CD4-positive, alpha-beta T cell (primary cell): ENCODE measurements at regions of chr19 and their contacts with region 1.

Region 1: DNA sequence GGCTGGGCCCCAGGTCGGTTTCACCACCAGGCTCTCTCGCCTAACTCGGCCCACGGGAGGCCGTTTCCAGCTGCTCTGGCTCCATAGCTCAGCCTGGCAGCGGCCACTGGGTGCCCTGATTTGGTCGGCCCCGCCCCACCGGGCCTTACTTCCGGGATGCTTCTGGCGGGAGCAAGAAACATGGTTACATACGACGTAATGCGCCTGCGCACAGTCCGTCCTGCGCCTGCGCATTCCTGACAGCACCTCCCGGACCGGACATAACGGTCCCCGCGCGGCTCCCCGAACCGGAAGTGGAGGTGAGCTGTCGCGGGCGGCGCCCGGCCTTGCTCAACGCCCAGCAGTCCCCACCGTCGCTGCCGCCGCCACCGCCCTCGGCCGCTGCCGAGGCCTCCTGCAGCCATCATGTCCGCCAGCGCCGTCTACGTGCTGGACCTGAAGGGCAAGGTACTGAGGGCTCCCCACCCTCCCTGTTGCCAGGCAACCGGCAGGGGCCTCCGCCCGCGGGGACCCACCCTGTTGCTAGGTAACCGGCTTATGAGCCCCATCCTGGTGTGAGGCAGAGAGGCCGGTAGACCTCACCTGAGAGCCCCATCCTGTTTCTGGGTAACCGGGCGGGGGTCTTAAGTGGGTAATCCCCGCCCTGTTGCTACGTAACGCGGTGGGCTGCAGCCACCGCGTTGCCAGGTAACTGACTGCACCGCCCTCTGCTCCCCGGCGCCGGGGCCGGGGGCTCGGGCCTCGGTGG is at the start of gene AP1M1:
- DNase-seq: peak; percentile 96 to 99 (median 99)
- ATAC-seq: peak; percentile 87
- H3K4me3 ChIP-seq: peak within 1 kb of the TSS; percentile 90
- H3K4me3 Mint-ChIP-seq: peak within 1 kb of the TSS; percentile 95
- H3K27ac ChIP-seq: peak within 1 kb of the TSS; percentile 69 to 81
- H3K27ac Mint-ChIP-seq: peak within 1 kb of the TSS; percentile 92
- H3K4me1 ChIP-seq: peaks cover 35% of the 10 kb centered on the region
- H3K4me1 Mint-ChIP-seq: peaks cover 37% of the 10 kb centered on the region
- H3K27me3 ChIP-seq: no peaks in the 10 kb centered on the region
- H3K27me3 Mint-ChIP-seq: no peaks in the 10 kb centered on the region
- CTCF ChIP-seq: peak; percentile 6
- total RNA-seq, gene AP1M1: 52.1 to 58.3 TPM

Region 2: GRCh38 chr19:15836595-15837337 is 361.0 kb before region 1 on chr19:
- CTCF ChIA-PET with region 1: no interaction called
- POLR2A ChIA-PET with region 1: interaction called, 5 read pairs
- intact Hi-C with region 1: loop called in 1 of 2 experiments (anchors 5 kb)
- DNase-seq: peak; percentile 86 to 98 (median 95)
- ATAC-seq: peak; percentile 86
- H3K4me3 ChIP-seq: peak overlapping the region; percentile 96
- H3K4me3 Mint-ChIP-seq: peak overlapping the region; percentile 96
- H3K27ac ChIP-seq: peak overlapping the region; percentile 97 to 99
- H3K27ac Mint-ChIP-seq: peak overlapping the region; percentile 92
- H3K4me1 ChIP-seq: peaks cover 20% of the 10 kb centered on the region
- H3K4me1 Mint-ChIP-seq: peaks cover 18% of the 10 kb centered on the region
- H3K27me3 ChIP-seq: no peaks in the 10 kb centered on the region
- H3K27me3 Mint-ChIP-seq: no peaks in the 10 kb centered on the region
- CTCF ChIP-seq: no peak

Region 3: DNA sequence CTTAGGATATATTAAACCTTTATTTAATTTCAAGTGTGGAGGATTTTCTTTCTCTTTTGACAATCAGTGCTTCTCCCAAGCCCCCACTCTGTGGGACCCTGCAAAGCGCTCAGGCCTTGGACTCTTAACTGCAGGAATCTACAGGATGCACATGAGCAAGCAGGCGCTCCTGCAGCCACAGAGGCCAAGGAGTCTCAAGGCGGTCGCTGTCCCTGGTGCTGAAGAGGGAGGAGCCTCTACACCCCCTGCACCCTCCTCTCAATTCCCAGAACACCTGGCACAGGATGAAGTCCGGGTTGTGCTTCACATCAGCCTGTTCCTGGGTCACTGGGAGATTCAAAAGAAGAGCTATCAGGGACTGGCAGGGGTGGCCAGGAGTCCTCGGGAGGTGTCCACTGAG is 235.5 kb before region 1 on chr19:
- CTCF ChIA-PET with region 1: no interaction called
- POLR2A ChIA-PET with region 1: no interaction called
- intact Hi-C with region 1: no loop called
- DNase-seq: no peak
- ATAC-seq: no peak
- H3K4me3 ChIP-seq: no peak overlapping the region
- H3K4me3 Mint-ChIP-seq: no peak overlapping the region
- H3K27ac ChIP-seq: no peak overlapping the region
- H3K27ac Mint-ChIP-seq: no peak overlapping the region
- H3K4me1 ChIP-seq: no peaks in the 10 kb centered on the region
- H3K4me1 Mint-ChIP-seq: no peaks in the 10 kb centered on the region
- H3K27me3 ChIP-seq: peaks cover 16 to 37% of the 10 kb centered on the region in 2 experiments
- H3K27me3 Mint-ChIP-seq: peaks cover 65% of the 10 kb centered on the region
- CTCF ChIP-seq: no peak

Region 4: GRCh38 chr19:16217716-16218451 is 20.1 kb after region 1 on chr19:
- CTCF ChIA-PET with region 1: no interaction called
- POLR2A ChIA-PET with region 1: no interaction called
- intact Hi-C with region 1: no loop called
- DNase-seq: peak in 2 of 14 experiments; percentile 13 to 14
- ATAC-seq: no peak
- H3K4me3 ChIP-seq: no peak overlapping the region
- H3K4me3 Mint-ChIP-seq: no peak overlapping the region
- H3K27ac ChIP-seq: no peak overlapping the region
- H3K27ac Mint-ChIP-seq: peak overlapping the region; percentile 73
- H3K4me1 ChIP-seq: peaks cover 34% of the 10 kb centered on the region
- H3K4me1 Mint-ChIP-seq: peaks cover 53% of the 10 kb centered on the region
- H3K27me3 ChIP-seq: no peaks in the 10 kb centered on the region
- H3K27me3 Mint-ChIP-seq: no peaks in the 10 kb centered on the region
- CTCF ChIP-seq: no peak

Region 5: DNA sequence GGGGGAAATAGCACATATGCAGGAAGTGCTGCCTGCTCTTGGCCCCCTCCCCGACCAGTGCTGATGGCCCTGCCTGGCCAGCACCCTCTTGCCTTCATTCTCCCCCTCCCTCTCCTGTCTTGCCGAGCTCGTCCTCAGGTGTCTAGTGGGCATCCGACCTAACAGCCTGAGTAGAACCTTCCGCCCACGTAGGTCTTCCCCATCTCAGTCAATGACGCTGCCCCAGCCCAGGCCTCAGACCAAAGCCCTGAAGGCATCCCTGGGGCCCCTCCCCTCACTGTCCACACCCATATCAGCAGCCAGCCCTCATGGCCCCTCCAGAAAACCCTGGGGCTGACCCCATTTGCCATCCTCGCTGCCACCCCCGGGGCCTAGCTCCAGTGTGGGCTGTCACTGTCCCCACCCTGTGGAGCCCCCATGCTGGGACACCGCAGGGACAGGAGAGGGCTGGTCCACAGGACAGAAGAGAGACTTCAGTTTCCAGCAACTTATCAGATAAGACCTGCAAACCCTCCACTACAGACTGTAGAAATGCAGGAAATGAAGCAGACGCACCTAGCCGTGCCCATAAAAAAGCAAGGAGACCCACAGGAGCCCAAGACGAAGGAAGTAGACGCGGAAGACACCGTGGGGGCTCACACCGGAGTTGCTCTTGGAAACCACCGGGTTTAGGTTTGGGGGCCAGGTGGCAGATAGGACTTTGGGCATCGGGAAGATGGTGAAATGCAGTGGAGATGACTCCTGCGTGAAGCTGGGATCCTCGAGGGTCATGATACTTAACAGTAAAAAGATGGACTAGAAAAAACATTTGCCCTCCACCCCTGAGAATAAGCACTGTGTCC is 38.2 kb after region 1 on chr19:
- CTCF ChIA-PET with region 1: no interaction called
- POLR2A ChIA-PET with region 1: no interaction called
- intact Hi-C with region 1: loop called in 1 of 2 experiments (anchors 5 kb)
- DNase-seq: no peak
- ATAC-seq: no peak
- H3K4me3 ChIP-seq: no peak overlapping the region
- H3K4me3 Mint-ChIP-seq: no peak overlapping the region
- H3K27ac ChIP-seq: peak overlapping the region in 1 of 2 donors; percentile 42
- H3K27ac Mint-ChIP-seq: peak overlapping the region; percentile 69
- H3K4me1 ChIP-seq: peaks cover 18% of the 10 kb centered on the region
- H3K4me1 Mint-ChIP-seq: peaks cover 36% of the 10 kb centered on the region
- H3K27me3 ChIP-seq: no peaks in the 10 kb centered on the region
- H3K27me3 Mint-ChIP-seq: no peaks in the 10 kb centered on the region
- CTCF ChIP-seq: no peak

Region 6: GRCh38 chr19:16293118-16294091 is 95.6 kb after region 1 on chr19:
- CTCF ChIA-PET with region 1: no interaction called
- POLR2A ChIA-PET with region 1: no interaction called
- intact Hi-C with region 1: no loop called
- DNase-seq: peak in 1 of 14 experiments; percentile 33
- ATAC-seq: no peak
- H3K4me3 ChIP-seq: no peak overlapping the region
- H3K4me3 Mint-ChIP-seq: no peak overlapping the region
- H3K27ac ChIP-seq: no peak overlapping the region
- H3K27ac Mint-ChIP-seq: no peak overlapping the region
- H3K4me1 ChIP-seq: peaks cover 5% of the 10 kb centered on the region
- H3K4me1 Mint-ChIP-seq: peaks cover 9% of the 10 kb centered on the region
- H3K27me3 ChIP-seq: no peaks in the 10 kb centered on the region
- H3K27me3 Mint-ChIP-seq: no peaks in the 10 kb centered on the region
- CTCF ChIP-seq: no peak

Region 7: DNA sequence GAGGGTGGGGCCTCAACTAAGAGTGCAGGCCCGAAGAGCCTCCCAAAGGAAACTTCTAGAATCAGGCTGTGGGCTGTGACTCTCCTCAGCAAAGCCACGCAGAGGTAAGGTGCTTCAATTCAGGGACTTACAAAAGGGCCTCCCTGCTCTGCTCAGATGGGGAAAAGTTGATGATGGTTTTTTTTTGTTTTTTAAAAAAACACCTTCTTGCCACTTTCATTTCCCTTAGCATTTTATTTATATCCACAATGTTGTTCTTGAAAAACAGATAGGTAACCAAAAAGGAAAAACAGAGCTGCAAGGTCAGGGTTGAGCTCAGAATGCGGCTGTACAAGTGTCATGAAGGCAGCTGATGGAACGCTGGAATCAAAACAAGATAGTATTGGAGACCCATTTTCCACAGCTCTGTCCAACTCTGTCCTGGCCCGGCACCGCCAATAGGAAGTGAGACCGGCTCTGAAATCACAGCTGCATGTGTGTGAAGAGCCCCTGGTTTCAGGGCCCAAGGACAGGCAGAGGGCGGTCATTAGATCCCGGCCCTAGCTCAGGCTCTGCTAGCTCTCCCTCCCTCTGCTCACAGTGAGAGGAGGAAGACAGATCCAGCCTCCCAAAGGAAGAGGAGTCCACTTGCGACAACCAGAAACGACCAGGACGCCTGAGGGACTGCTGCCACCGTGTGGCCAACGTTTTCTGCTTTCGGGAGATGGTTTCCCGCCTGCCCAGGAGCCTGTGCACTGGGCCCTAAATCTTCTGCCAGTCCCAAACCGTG is 185.2 kb after region 1 on chr19:
- CTCF ChIA-PET with region 1: no interaction called
- POLR2A ChIA-PET with region 1: no interaction called
- intact Hi-C with region 1: loop called in 1 of 2 experiments (anchors 5 kb)
- DNase-seq: peak; percentile 69 to 90 (median 82)
- ATAC-seq: peak; percentile 81
- H3K4me3 ChIP-seq: peak overlapping the region; percentile 19
- H3K4me3 Mint-ChIP-seq: peak overlapping the region; percentile 76
- H3K27ac ChIP-seq: peak overlapping the region; percentile 16 to 67
- H3K27ac Mint-ChIP-seq: no peak overlapping the region
- H3K4me1 ChIP-seq: peaks cover 82% of the 10 kb centered on the region
- H3K4me1 Mint-ChIP-seq: peaks cover 62% of the 10 kb centered on the region
- H3K27me3 ChIP-seq: no peaks in the 10 kb centered on the region
- H3K27me3 Mint-ChIP-seq: no peaks in the 10 kb centered on the region
- CTCF ChIP-seq: peak; percentile 92

Region 8: DNA sequence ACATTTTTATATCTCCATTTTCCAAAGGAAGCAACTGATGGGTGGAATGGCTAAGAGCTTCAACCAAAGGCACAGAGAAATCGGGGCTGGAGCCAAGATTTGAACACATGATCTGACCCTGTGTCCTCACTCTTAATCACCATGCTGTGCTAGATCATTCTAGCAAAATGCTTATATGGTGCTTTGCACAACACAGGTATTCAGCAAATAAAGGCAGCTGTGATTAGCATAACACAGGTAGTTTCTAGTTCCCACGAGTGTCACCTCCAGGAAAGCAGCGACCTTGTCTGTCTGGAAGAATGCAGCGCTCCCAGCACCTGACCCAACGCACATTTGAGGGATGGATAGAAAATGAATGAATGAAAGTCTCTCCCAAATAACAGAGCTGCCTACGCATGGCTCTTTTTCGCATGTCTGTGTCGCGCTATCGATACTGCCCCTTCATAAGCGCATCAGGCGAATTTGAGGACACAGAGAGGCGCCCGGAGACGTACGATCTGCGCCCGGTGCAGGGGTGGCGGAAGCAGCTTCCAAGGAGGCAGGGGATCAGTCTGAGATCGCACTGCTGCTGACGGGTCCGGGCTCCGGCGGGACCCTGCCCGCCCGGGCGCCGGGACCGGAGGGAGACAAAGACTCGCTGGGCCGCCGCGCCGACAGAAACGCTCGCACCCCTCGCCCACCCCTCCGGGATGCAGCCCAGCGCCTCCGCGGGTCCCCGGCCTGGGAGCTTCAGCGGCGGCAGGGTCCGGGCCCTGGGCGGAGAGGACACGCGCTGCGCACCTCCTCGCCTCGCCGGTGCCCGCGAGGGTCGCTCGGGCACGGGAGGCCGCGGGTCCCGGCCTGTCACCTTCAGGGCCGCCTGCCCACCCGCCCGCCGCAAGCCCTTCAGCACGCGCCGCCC is 273.4 kb after region 1 on chr19:
- CTCF ChIA-PET with region 1: no interaction called
- POLR2A ChIA-PET with region 1: no interaction called
- intact Hi-C with region 1: loop called in 1 of 2 experiments (anchors 5 kb)
- DNase-seq: peak in 9 of 14 experiments; percentile 5 to 51 (median 22)
- ATAC-seq: peak; percentile 12
- H3K4me3 ChIP-seq: peak overlapping the region; percentile 74
- H3K4me3 Mint-ChIP-seq: peak overlapping the region; percentile 91
- H3K27ac ChIP-seq: no peak overlapping the region
- H3K27ac Mint-ChIP-seq: peak overlapping the region; percentile 73
- H3K4me1 ChIP-seq: peaks cover 38% of the 10 kb centered on the region
- H3K4me1 Mint-ChIP-seq: peaks cover 39% of the 10 kb centered on the region
- H3K27me3 ChIP-seq: no peaks in the 10 kb centered on the region
- H3K27me3 Mint-ChIP-seq: no peaks in the 10 kb centered on the region
- CTCF ChIP-seq: no peak